Left ventricle myocardium superior (tissue), 1 donor: ENCODE measurements at regions of chr9 and their contacts with region 1.

Region 1: GRCh38 chr9:77521091-77521490 is 127.0 kb downstream of the GNA14 start:
- DNase-seq: peak; percentile 64
- ATAC-seq: peak; percentile 57

Region 2: DNA sequence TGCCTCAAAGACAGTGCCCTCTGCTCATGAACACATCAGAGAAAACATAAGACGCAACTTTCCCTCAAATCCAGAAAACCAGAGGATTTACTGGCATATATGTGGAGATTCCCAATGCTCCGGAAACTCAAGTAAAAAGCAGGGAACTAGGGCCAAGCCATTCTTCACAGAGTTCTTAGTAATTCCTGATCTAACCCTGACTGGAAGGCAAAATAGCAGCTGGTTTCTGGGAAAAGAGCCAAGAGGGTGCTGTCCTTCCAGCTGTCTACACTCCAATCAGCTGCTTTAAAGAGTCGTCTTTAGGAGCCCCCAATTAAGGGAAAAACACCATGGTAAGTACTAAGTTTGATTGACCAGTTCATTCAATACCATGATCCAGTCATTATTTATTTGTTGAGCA is 77.4 kb after region 1 on chr9:
- intact Hi-C with region 1: loop called (anchors 10 kb)
- DNase-seq: no peak
- ATAC-seq: peak; percentile 89